ENCODE measurements at regions of chr6 and their contacts with region 1.

Region 1: GRCh38 chr6:112043032-112044007 is 10.6 kb upstream of the CCN6 start:
- DNase-seq: peak; percentile 96
- ATAC-seq: peak; percentile 99
- H3K4me3 Mint-ChIP-seq: peak overlapping the region; percentile 95
- H3K27ac Mint-ChIP-seq: peak overlapping the region; percentile 99
- H3K4me1 Mint-ChIP-seq: peaks cover 18% of the 10 kb centered on the region
- H3K27me3 Mint-ChIP-seq: no peaks in the 10 kb centered on the region

Region 2: GRCh38 chr6:111259089-111259831 is 784.1 kb before region 1 on chr6:
- CTCF ChIA-PET with region 1: interaction called, 33 read pairs
- POLR2A ChIA-PET with region 1: interaction called, 7 read pairs
- DNase-seq: peak; percentile 99
- ATAC-seq: peak; percentile 96
- H3K4me3 Mint-ChIP-seq: peak overlapping the region; percentile 79
- H3K27ac Mint-ChIP-seq: peak overlapping the region; percentile 87
- H3K4me1 Mint-ChIP-seq: peaks cover 30% of the 10 kb centered on the region
- H3K27me3 Mint-ChIP-seq: peaks cover 3% of the 10 kb centered on the region

Region 3: DNA sequence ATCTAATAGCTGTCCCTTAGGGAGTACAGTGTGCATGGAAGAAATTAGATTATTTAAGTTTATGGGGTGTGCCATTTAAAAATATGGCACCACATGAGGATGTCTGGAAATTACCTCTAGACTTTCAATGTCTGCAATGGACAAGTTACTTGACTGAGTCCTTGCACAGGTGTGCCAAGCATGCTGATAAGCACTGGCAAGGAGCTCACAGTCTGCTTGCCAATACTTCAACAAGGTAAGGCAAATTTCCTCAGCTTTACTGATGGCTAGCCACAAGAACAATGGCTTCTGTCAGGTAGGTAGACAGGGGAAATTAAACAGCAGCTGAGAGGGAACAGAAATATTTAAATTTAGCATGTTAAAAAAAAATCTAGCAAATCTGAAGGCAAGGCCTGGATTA is 346.5 kb before region 1 on chr6:
- CTCF ChIA-PET with region 1: interaction called, 18 read pairs
- POLR2A ChIA-PET with region 1: no interaction called
- DNase-seq: no peak
- ATAC-seq: no peak
- H3K4me3 Mint-ChIP-seq: no peak overlapping the region
- H3K27ac Mint-ChIP-seq: no peak overlapping the region
- H3K4me1 Mint-ChIP-seq: peaks cover 38% of the 10 kb centered on the region
- H3K27me3 Mint-ChIP-seq: no peaks in the 10 kb centered on the region

Region 4: GRCh38 chr6:111764238-111765175 is 278.8 kb before region 1 on chr6:
- CTCF ChIA-PET with region 1: interaction called, 25 read pairs
- POLR2A ChIA-PET with region 1: no interaction called
- DNase-seq: peak; percentile 58
- ATAC-seq: peak; percentile 37
- H3K4me3 Mint-ChIP-seq: peak overlapping the region; percentile 63
- H3K27ac Mint-ChIP-seq: peak overlapping the region; percentile 90
- H3K4me1 Mint-ChIP-seq: peaks cover 98% of the 10 kb centered on the region
- H3K27me3 Mint-ChIP-seq: no peaks in the 10 kb centered on the region

Region 5: GRCh38 chr6:111989743-111990142 is 53.6 kb before region 1 on chr6:
- CTCF ChIA-PET with region 1: interaction called, 11 read pairs
- POLR2A ChIA-PET with region 1: no interaction called
- DNase-seq: peak; percentile 47
- ATAC-seq: peak; percentile 63
- H3K4me3 Mint-ChIP-seq: no peak overlapping the region
- H3K27ac Mint-ChIP-seq: peak overlapping the region; percentile 82
- H3K4me1 Mint-ChIP-seq: peaks cover 85% of the 10 kb centered on the region
- H3K27me3 Mint-ChIP-seq: no peaks in the 10 kb centered on the region

Region 6: GRCh38 chr6:112018619-112019416 is 24.5 kb before region 1 on chr6:
- CTCF ChIA-PET with region 1: interaction called, 55 read pairs
- POLR2A ChIA-PET with region 1: interaction called, 3 read pairs
- DNase-seq: no peak
- ATAC-seq: no peak
- H3K4me3 Mint-ChIP-seq: no peak overlapping the region
- H3K27ac Mint-ChIP-seq: no peak overlapping the region
- H3K4me1 Mint-ChIP-seq: peaks cover 11% of the 10 kb centered on the region
- H3K27me3 Mint-ChIP-seq: no peaks in the 10 kb centered on the region

Region 7: GRCh38 chr6:112139052-112139451 is 95.7 kb after region 1 on chr6:
- CTCF ChIA-PET with region 1: no interaction called
- POLR2A ChIA-PET with region 1: no interaction called
- DNase-seq: no peak
- ATAC-seq: no peak
- H3K4me3 Mint-ChIP-seq: no peak overlapping the region
- H3K27ac Mint-ChIP-seq: no peak overlapping the region
- H3K4me1 Mint-ChIP-seq: no peaks in the 10 kb centered on the region
- H3K27me3 Mint-ChIP-seq: peaks cover 20% of the 10 kb centered on the region

Region 8: GRCh38 chr6:112153926-112154607 is 110.7 kb after region 1 on chr6:
- CTCF ChIA-PET with region 1: no interaction called
- POLR2A ChIA-PET with region 1: no interaction called
- DNase-seq: no peak
- ATAC-seq: no peak
- H3K4me3 Mint-ChIP-seq: no peak overlapping the region
- H3K27ac Mint-ChIP-seq: no peak overlapping the region
- H3K4me1 Mint-ChIP-seq: peaks cover 13% of the 10 kb centered on the region
- H3K27me3 Mint-ChIP-seq: peaks cover 19% of the 10 kb centered on the region

Measured in activated CD8-positive, alpha-beta T cell treated with anti-CD3 and anti-CD28 coated beads, Interleukin-2, amount 10 ng/mL, durations not matched to agents 7 days and 5 days (primary cell).